Activated T-helper 1 cell treated with anti-CD3 and anti-CD28 coated beads, Interleukin-12 subunit alpha, Interleukin-12 subunit beta, Interleukin-2, Interleukin-4 antibody, amounts not matched to agents 30 ng/mL and 10 ng/mL and 1 ng/mL, durations not matched to agents 14 hours and 24 hours and 36 hours (primary cell): ENCODE measurements at regions of chr1 and their contacts with region 1.

Region 1: DNA sequence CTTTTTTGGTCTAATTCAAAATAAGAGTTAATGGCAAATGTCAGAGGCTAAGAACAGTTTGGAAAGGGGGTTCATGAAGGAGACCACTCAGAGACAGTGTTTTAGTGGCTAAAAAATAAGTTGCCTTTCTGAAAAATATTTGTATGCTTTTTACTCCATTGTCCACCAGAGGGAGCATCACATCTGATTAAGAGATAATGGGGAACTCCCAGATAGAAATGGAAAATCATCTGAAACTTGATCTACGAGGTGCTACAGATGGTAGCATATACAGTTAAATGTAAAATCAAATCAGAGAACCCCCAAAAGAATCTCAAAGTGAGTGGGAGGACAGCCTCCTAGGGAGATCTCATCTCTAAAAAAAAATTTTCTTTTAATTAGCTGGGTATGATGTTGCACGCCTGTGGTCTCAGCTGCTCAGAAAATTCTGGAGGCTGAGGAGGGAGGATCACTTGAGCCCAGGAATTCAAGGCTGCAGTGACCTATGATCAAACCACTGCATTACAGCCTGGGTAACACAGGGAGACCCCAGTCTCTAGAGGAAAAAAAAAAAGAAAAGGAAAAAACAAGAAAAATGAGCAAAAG is 9.7 kb downstream of the SMYD3 start:
- DNase-seq: no peak
- H3K4me3 Mint-ChIP-seq: no peak overlapping the region
- H3K27ac Mint-ChIP-seq: peak overlapping the region; percentile 26
- H3K4me1 Mint-ChIP-seq: peaks cover 11% of the 10 kb centered on the region
- H3K27me3 Mint-ChIP-seq: no peaks in the 10 kb centered on the region

Region 2: DNA sequence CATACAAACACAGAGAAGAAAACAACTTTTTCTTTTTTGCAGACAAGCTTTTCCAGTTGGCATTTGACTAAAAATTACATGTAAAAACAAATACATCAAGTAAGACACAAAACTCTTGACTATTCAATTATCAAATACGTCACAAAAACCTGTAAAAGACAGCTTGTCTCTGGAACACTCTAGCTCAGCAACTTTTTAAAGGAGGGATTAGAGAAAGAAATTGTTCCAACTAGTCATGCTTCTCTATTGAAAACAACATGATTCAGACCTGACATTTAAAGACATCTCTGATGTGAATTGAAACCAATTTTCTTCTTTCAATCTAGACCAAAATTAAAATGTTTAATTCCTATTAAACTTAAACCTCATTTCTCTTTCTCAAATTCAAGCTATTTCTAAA is 20.7 kb before region 1 on chr1:
- intact Hi-C with region 1: loop called (anchors 1 kb)
- DNase-seq: no peak
- H3K4me3 Mint-ChIP-seq: no peak overlapping the region
- H3K27ac Mint-ChIP-seq: no peak overlapping the region
- H3K4me1 Mint-ChIP-seq: peaks cover 20% of the 10 kb centered on the region
- H3K27me3 Mint-ChIP-seq: no peaks in the 10 kb centered on the region

Region 3: GRCh38 chr1:246753670-246754535 is 256.5 kb after region 1 on chr1:
- intact Hi-C with region 1: loop called (anchors 1 kb)
- DNase-seq: peak; percentile 27
- H3K4me3 Mint-ChIP-seq: no peak overlapping the region
- H3K27ac Mint-ChIP-seq: no peak overlapping the region
- H3K4me1 Mint-ChIP-seq: no peaks in the 10 kb centered on the region
- H3K27me3 Mint-ChIP-seq: no peaks in the 10 kb centered on the region